Endothelial cell of umbilical vein (primary cell): ENCODE measurements at regions of chr10 and their contacts with region 1.

Region 1: GRCh38 chr10:79178614-79179163 is 109.9 kb downstream of the ZMIZ1 start:
- DNase-seq: peak; percentile 93
- H3K4me3 ChIP-seq: no peak overlapping the region
- H3K27ac ChIP-seq: peak overlapping the region; percentile 64
- H3K4me1 ChIP-seq: peaks cover 57% of the 10 kb centered on the region
- H3K27me3 ChIP-seq: no peaks in the 10 kb centered on the region
- CTCF ChIP-seq: no peak
- POLR2A ChIP-seq: no peak

Region 2: DNA sequence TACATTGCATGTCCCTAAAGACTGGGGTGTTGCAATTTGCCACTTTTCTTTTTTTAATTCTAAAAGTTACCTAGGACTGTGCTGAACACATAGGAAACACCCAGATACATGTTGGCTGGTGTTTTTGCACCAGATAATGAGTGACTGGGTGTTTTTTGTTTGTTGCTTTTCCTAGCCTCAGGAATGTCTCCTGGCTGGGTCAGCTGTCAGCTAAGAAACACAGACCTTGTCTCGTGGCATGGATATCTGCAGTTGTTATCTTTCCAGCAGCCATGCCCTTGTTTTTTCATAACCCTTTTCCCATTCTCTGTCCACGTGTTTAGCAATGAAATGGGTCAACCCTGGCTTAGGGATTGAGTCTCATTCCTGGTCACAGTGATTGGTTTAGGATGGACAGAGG is 543.9 kb before region 1 on chr10:
- CTCF ChIA-PET with region 1: no interaction called
- POLR2A ChIA-PET with region 1: no interaction called
- dilution Hi-C with region 1: no loop called
- intact Hi-C with region 1: no loop called
- DNase-seq: no peak
- H3K4me3 ChIP-seq: no peak overlapping the region
- H3K27ac ChIP-seq: no peak overlapping the region
- H3K4me1 ChIP-seq: no peaks in the 10 kb centered on the region
- H3K27me3 ChIP-seq: peaks cover 0 to 4% of the 10 kb centered on the region in 2 experiments
- CTCF ChIP-seq: no peak
- POLR2A ChIP-seq: no peak

Region 3: GRCh38 chr10:79149662-79150443 is 28.8 kb before region 1 on chr10:
- CTCF ChIA-PET with region 1: interaction called, 3 read pairs
- POLR2A ChIA-PET with region 1: no interaction called
- dilution Hi-C with region 1: no loop called
- intact Hi-C with region 1: loop called (anchors 2 kb)
- DNase-seq: no peak
- H3K4me3 ChIP-seq: no peak overlapping the region
- H3K27ac ChIP-seq: peak overlapping the region; percentile 88
- H3K4me1 ChIP-seq: peaks cover 84% of the 10 kb centered on the region
- H3K27me3 ChIP-seq: no peaks in the 10 kb centered on the region
- CTCF ChIP-seq: no peak
- POLR2A ChIP-seq: peak; percentile 43

Region 4: GRCh38 chr10:79155301-79156081 is 23.2 kb before region 1 on chr10:
- CTCF ChIA-PET with region 1: interaction called, 33 read pairs
- POLR2A ChIA-PET with region 1: no interaction called
- dilution Hi-C with region 1: no loop called
- intact Hi-C with region 1: loop called (anchors 1 kb)
- DNase-seq: peak; percentile 66
- H3K4me3 ChIP-seq: no peak overlapping the region
- H3K27ac ChIP-seq: peak overlapping the region; percentile 77
- H3K4me1 ChIP-seq: peaks cover 76% of the 10 kb centered on the region
- H3K27me3 ChIP-seq: no peaks in the 10 kb centered on the region
- CTCF ChIP-seq: peak in 1 of 2 donors; percentile 34
- POLR2A ChIP-seq: no peak